CD8-positive, alpha-beta T cell (primary cell): ENCODE measurements at regions of chr15 and their contacts with region 1.

Region 1: DNA sequence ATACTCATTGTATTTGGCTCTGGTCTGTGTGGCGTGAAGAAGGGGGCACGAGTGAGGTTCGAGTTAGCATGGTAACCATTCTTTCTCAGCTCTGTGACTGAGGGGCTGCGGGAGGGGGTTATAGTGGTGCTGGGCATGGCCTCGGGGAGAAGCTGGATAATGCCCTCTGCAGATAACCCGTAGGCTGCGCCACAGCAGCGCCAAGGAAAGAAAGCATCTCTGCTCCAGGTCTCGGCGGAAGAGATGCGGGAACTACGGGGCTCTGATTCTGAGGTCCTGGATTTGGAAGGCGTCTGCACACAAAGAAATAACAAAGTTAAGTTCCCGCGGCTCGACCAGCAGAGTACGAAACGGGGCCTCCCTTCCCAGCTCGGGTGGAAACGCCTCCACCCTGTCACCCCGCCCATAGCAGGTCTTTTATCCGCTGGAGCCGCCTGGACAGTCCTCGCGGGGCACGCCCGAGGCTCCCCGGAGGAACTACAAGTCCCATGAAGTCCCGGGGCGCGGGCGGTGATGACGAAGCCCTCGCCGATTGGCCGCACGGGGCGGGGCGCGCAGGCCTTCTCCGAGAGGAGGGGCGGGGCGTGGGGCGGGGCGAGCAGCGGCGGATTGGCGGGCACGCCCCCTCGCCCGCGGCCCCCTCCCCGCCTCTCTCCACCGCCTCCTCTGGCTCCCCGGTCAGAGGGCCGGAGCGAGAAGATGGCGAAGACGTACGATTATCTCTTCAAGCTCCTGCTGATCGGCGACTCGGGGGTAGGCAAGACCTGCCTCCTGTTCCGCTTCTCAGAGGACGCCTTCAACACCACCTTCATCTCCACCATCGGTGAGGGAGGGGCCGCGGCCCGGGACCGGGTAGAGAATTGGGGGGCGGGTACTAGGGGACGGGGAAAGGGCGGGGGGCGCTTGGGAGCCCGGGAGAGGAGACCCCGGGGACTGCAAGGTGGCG is at the start of gene RAB8B:
- DNase-seq: peak; percentile 92 to 99 (median 98)
- ATAC-seq: peak; percentile 74
- H3K4me3 ChIP-seq: peak within 1 kb of the TSS; percentile 78 to 86
- H3K4me3 Mint-ChIP-seq: peak within 1 kb of the TSS; percentile 92
- H3K27ac ChIP-seq: peak within 1 kb of the TSS; percentile 71 to 98
- H3K27ac Mint-ChIP-seq: peak within 1 kb of the TSS; percentile 99
- H3K4me1 ChIP-seq: peaks cover 39% of the 10 kb centered on the region
- H3K4me1 Mint-ChIP-seq: peaks cover 47% of the 10 kb centered on the region
- H3K27me3 ChIP-seq: no peaks in the 10 kb centered on the region
- H3K27me3 Mint-ChIP-seq: no peaks in the 10 kb centered on the region
- CTCF ChIP-seq: no peak
- total RNA-seq, gene RAB8B: 145 to 146 TPM

Region 2: GRCh38 chr15:62348623-62349022 is 840.6 kb before region 1 on chr15:
- CTCF ChIA-PET with region 1: no interaction called
- POLR2A ChIA-PET with region 1: no interaction called
- intact Hi-C with region 1: no loop called
- DNase-seq: no peak
- ATAC-seq: no peak
- H3K4me3 ChIP-seq: no peak overlapping the region
- H3K4me3 Mint-ChIP-seq: no peak overlapping the region
- H3K27ac ChIP-seq: no peak overlapping the region
- H3K27ac Mint-ChIP-seq: no peak overlapping the region
- H3K4me1 ChIP-seq: no peaks in the 10 kb centered on the region
- H3K4me1 Mint-ChIP-seq: peaks cover 6% of the 10 kb centered on the region
- H3K27me3 ChIP-seq: no peaks in the 10 kb centered on the region
- H3K27me3 Mint-ChIP-seq: peaks cover 4% of the 10 kb centered on the region
- CTCF ChIP-seq: no peak

Region 3: GRCh38 chr15:63157118-63157843 is 31.9 kb before region 1 on chr15 and contains the start of gene RPS27L:
- CTCF ChIA-PET with region 1: interaction called, 9 read pairs
- POLR2A ChIA-PET with region 1: interaction called, 21 read pairs
- intact Hi-C with region 1: loop called (anchors 1 kb)
- DNase-seq: peak; percentile 65 to 91 (median 88)
- ATAC-seq: peak; percentile 96
- H3K4me3 ChIP-seq: peak within 1 kb of the TSS; percentile 94 to 96
- H3K4me3 Mint-ChIP-seq: peak within 1 kb of the TSS; percentile 100
- H3K27ac ChIP-seq: peak within 1 kb of the TSS; percentile 75 to 78
- H3K27ac Mint-ChIP-seq: peak within 1 kb of the TSS; percentile 97
- H3K4me1 ChIP-seq: peaks cover 18% of the 10 kb centered on the region
- H3K4me1 Mint-ChIP-seq: peaks cover 26% of the 10 kb centered on the region
- H3K27me3 ChIP-seq: no peaks in the 10 kb centered on the region
- H3K27me3 Mint-ChIP-seq: no peaks in the 10 kb centered on the region
- CTCF ChIP-seq: no peak
- total RNA-seq, gene RPS27L: 40.3 to 45.9 TPM

Region 4: DNA sequence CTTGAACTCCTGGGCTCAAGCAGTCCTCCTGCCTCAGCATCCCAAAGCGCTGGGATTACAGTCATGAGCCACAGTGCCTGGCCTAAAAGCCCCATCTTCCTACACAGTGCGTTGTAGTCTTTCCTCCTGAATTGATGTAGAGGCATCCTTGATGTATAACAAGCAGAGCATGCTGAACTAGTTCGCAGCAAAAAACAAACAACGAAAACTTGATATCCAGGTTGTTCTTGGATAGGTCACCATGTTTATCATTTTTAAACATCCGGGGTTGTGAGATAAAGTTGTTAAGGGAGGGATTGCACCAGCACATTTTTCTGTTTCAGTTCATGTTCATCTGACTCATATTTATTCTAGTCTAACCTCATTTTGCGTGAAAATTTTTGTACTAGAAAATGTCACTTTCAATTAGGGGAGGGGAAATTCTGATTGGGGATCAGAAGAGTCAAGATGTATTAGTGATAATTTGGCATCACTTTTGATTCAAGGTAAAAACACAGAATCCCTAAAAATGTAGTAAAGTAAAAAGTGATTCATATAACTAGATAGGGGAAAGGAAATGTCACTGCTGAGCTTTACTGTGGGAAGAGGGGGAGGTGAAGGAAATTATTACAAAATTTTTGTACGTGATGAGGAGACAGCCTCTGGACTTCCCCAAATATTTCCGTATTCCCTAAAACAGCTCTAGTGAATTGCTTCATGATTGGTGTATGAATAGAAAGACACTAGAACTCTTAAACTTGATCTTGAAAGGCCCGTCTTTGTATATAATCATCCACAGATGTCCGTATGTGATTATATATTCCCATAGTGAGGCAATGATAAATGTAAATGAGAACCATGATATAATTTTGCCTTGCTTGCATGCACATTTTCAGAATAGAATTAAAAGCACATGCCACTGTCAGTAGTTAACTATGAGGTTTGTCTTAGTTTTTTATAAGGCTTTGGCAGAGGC is 23.1 kb after region 1 on chr15:
- CTCF ChIA-PET with region 1: interaction called, 5 read pairs
- POLR2A ChIA-PET with region 1: interaction called, 15 read pairs
- intact Hi-C with region 1: loop called in 1 of 2 experiments (anchors 2 kb)
- DNase-seq: peak in 1 of 9 experiments; percentile 56
- ATAC-seq: peak; percentile 45
- H3K4me3 ChIP-seq: no peak overlapping the region
- H3K4me3 Mint-ChIP-seq: peak overlapping the region; percentile 1
- H3K27ac ChIP-seq: peak overlapping the region in 1 of 2 experiments; percentile 63
- H3K27ac Mint-ChIP-seq: peak overlapping the region; percentile 82
- H3K4me1 ChIP-seq: peaks cover 49% of the 10 kb centered on the region
- H3K4me1 Mint-ChIP-seq: peaks cover 73% of the 10 kb centered on the region
- H3K27me3 ChIP-seq: no peaks in the 10 kb centered on the region
- H3K27me3 Mint-ChIP-seq: no peaks in the 10 kb centered on the region
- CTCF ChIP-seq: no peak

Region 5: GRCh38 chr15:63232405-63232804 is 43.2 kb after region 1 on chr15:
- CTCF ChIA-PET with region 1: interaction called, 16 read pairs
- POLR2A ChIA-PET with region 1: interaction called, 26 read pairs
- intact Hi-C with region 1: loop called (anchors 2 to 5 kb)
- DNase-seq: peak in 2 of 9 experiments; percentile 37 to 70
- ATAC-seq: peak; percentile 82
- H3K4me3 ChIP-seq: no peak overlapping the region
- H3K4me3 Mint-ChIP-seq: peak overlapping the region; percentile 53
- H3K27ac ChIP-seq: peak overlapping the region in 1 of 2 experiments; percentile 80
- H3K27ac Mint-ChIP-seq: peak overlapping the region; percentile 87
- H3K4me1 ChIP-seq: peaks cover 32% of the 10 kb centered on the region
- H3K4me1 Mint-ChIP-seq: peaks cover 74% of the 10 kb centered on the region
- H3K27me3 ChIP-seq: no peaks in the 10 kb centered on the region
- H3K27me3 Mint-ChIP-seq: no peaks in the 10 kb centered on the region
- CTCF ChIP-seq: no peak

Region 6: DNA sequence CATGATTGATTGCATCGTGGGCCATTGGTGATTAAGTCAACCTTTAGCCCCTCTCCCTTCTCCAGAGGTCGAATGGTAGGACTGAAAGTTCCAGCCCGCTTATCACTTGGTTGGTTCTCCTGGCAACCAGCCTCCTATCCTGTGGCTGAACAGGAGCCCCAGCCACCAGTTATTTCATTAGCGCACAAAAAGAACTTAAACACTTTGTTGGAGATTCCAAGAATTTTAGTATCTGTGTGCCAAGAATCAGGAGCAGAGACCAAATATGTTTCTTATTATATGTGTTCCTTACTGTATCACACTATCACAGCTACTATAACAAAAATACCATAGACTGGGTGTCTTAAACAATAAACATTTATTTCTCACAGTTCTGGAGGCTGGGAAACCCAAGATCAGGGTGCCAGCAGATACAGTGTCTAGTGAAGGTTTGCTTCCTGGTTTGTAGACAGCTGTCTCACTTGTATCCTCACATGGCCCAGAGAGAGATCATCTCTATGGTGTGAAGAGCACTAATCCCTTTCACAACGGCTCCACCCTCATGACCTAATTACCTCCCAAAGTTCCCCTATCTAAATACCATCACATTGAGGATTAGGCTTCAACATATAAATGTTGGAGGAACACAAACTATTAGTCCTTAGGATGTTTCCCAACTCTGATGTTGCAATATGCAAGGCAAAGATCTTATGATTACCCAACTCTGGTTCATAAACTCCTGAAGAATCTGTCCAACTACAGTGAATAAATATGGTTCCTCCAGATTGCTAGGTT is 57.7 kb after region 1 on chr15:
- CTCF ChIA-PET with region 1: interaction called, 4 read pairs
- POLR2A ChIA-PET with region 1: interaction called, 9 read pairs
- intact Hi-C with region 1: loop called in 1 of 2 experiments (anchors 2 kb)
- DNase-seq: peak in 2 of 9 experiments; percentile 32 to 56
- ATAC-seq: no peak
- H3K4me3 ChIP-seq: no peak overlapping the region
- H3K4me3 Mint-ChIP-seq: no peak overlapping the region
- H3K27ac ChIP-seq: no peak overlapping the region
- H3K27ac Mint-ChIP-seq: peak overlapping the region; percentile 27
- H3K4me1 ChIP-seq: peaks cover 28% of the 10 kb centered on the region
- H3K4me1 Mint-ChIP-seq: peaks cover 54% of the 10 kb centered on the region
- H3K27me3 ChIP-seq: no peaks in the 10 kb centered on the region
- H3K27me3 Mint-ChIP-seq: no peaks in the 10 kb centered on the region
- CTCF ChIP-seq: no peak

Region 7: GRCh38 chr15:63402498-63403253 is 213.5 kb after region 1 on chr15:
- CTCF ChIA-PET with region 1: interaction called, 4 read pairs
- POLR2A ChIA-PET with region 1: interaction called, 3 read pairs
- intact Hi-C with region 1: loop called (anchors 1 kb)
- DNase-seq: peak in 2 of 9 experiments; percentile 46 to 63
- ATAC-seq: peak; percentile 65
- H3K4me3 ChIP-seq: no peak overlapping the region
- H3K4me3 Mint-ChIP-seq: no peak overlapping the region
- H3K27ac ChIP-seq: no peak overlapping the region
- H3K27ac Mint-ChIP-seq: no peak overlapping the region
- H3K4me1 ChIP-seq: no peaks in the 10 kb centered on the region
- H3K4me1 Mint-ChIP-seq: peaks cover 5% of the 10 kb centered on the region
- H3K27me3 ChIP-seq: no peaks in the 10 kb centered on the region
- H3K27me3 Mint-ChIP-seq: peaks cover 11% of the 10 kb centered on the region
- CTCF ChIP-seq: peak; percentile 72